ENCODE measurements at regions of chr10 and their contacts with region 1.

Region 1: DNA sequence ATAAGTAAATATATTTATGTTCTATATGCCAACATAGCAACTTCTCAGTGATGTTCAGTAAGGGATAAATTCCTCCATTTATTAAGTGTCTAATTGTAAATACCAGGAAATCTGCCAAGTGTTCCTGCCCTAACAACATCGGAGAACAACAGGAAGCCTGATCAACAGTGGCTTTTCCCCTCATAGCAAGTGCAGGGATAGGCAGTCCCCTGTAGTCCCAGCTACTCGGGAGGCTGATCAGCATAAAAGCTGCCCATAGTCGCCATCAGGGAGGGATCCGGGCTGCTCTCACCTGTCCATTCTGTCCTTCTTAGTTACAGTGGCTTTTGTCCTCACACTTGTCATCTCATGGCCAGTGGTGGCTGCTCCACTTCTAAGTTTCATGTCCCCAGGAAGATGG is 141.3 kb downstream of the IDE start:
- DNase-seq: no peak
- ATAC-seq: no peak
- H3K4me3 ChIP-seq: no peak overlapping the region
- H3K27ac ChIP-seq: no peak overlapping the region
- H3K4me1 ChIP-seq: no peaks in the 10 kb centered on the region
- H3K27me3 ChIP-seq: no peaks in the 10 kb centered on the region
- CTCF ChIP-seq: no peak

Region 2: GRCh38 chr10:92074126-92074887 is 358.3 kb before region 1 on chr10:
- CTCF ChIA-PET with region 1: interaction called, 3 read pairs
- POLR2A ChIA-PET with region 1: no interaction called
- intact Hi-C with region 1: loop called (anchors 5 kb)
- DNase-seq: peak; percentile 32
- ATAC-seq: peak; percentile 37; the same call in 1 of the 2 replicates
- H3K4me3 ChIP-seq: no peak overlapping the region
- H3K27ac ChIP-seq: no peak overlapping the region
- H3K4me1 ChIP-seq: peaks cover 9% of the 10 kb centered on the region
- H3K27me3 ChIP-seq: no peaks in the 10 kb centered on the region
- CTCF ChIP-seq: peak; percentile 43; the same call in 1 of the 2 replicates

Region 3: GRCh38 chr10:92327445-92328433 is 104.9 kb before region 1 on chr10:
- CTCF ChIA-PET with region 1: no interaction called
- POLR2A ChIA-PET with region 1: no interaction called
- intact Hi-C with region 1: no loop called
- DNase-seq: no peak
- ATAC-seq: no peak
- H3K4me3 ChIP-seq: no peak overlapping the region
- H3K27ac ChIP-seq: peak overlapping the region; percentile 7; the same call in 1 of the 2 replicates
- H3K4me1 ChIP-seq: peaks cover 33% of the 10 kb centered on the region
- H3K27me3 ChIP-seq: no peaks in the 10 kb centered on the region
- CTCF ChIP-seq: no peak

Region 4: GRCh38 chr10:92366412-92367021 is 66.1 kb before region 1 on chr10:
- CTCF ChIA-PET with region 1: no interaction called
- POLR2A ChIA-PET with region 1: no interaction called
- intact Hi-C with region 1: loop called (anchors 10 kb)
- DNase-seq: no peak
- ATAC-seq: no peak
- H3K4me3 ChIP-seq: no peak overlapping the region
- H3K27ac ChIP-seq: no peak overlapping the region
- H3K4me1 ChIP-seq: no peaks in the 10 kb centered on the region
- H3K27me3 ChIP-seq: no peaks in the 10 kb centered on the region
- CTCF ChIP-seq: no peak